Activated T-helper 2 cell treated with anti-CD3 and anti-CD28 coated beads, Interferon-gamma antibody, Interleukin-2, Interleukin-4, amounts not matched to agents 10 μg/mL and 5 μg/mL and 100 μg/mL, durations not matched to agents 14 hours and 24 hours and 36 hours (primary cell): ENCODE measurements at regions of chr6 and their contacts with region 1.

Region 1: GRCh38 chr6:151004415-151005024 is 139.0 kb downstream of the MTHFD1L start:
- DNase-seq: no peak
- H3K4me3 Mint-ChIP-seq: no peak overlapping the region
- H3K27ac Mint-ChIP-seq: peak overlapping the region; percentile 67
- H3K4me1 Mint-ChIP-seq: peaks cover 33% of the 10 kb centered on the region
- H3K27me3 Mint-ChIP-seq: no peaks in the 10 kb centered on the region

Region 2: DNA sequence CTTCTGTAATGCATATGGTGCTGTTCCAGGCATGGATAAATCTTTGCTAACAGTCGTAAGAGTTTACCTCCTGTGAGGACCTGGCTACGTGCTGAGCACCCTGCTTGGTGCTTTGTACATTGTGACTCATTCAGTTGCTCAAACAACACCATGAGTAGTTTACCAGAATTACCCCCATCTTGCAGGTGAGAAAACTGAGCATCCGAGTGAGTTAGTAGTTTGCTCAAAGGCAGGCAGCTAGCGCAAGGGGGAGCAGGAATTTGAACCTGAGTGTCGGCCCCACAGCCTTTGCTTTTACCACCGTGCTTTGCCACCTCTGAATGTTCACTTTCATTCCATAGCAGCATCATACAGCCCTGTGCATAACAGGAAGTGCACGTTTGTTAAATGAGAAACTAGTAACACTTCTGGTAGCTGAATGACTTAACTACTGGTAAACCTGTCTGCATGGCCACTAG is 17.1 kb before region 1 on chr6:
- intact Hi-C with region 1: loop called (anchors 2 kb)
- DNase-seq: peak; percentile 29
- H3K4me3 Mint-ChIP-seq: peak overlapping the region; percentile 49
- H3K27ac Mint-ChIP-seq: peak overlapping the region; percentile 95
- H3K4me1 Mint-ChIP-seq: peaks cover 9% of the 10 kb centered on the region
- H3K27me3 Mint-ChIP-seq: no peaks in the 10 kb centered on the region

Region 3: DNA sequence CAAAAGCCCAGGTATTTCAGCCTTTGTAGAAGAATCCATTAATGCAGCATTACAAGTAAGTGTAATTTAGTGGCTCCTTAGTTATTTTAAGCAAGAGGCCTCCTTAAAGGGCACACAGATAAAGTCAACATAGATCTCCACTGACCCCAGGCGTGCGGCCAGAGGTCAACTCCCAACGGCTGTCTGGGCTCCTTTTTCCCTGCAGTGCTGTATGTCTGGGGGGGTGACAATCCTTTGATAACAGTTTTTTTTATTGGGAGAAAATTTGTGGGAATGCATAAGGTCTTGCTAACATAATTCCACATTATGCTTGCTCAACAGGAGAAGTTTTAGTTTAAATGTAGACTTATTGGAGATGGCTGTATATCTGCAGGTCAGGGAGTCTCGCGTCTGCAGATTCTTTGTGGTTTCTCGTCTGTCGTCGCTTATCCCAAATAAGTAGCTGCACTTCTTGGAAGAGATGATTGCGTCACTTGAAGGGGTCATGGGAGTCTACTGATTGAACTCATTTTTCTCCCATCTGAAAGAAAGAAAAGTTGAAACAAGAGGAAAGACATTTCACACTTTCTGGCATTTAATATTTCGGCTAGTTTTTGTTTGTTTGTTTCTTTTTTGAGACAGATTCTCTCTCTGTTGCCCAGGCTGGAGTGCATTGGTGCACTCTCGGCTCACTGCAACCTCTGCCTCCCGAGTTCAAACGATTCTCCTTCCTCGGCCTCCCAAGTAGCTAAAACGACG is 83.5 kb after region 1 on chr6:
- intact Hi-C with region 1: no loop called
- DNase-seq: no peak
- H3K4me3 Mint-ChIP-seq: no peak overlapping the region
- H3K27ac Mint-ChIP-seq: no peak overlapping the region
- H3K4me1 Mint-ChIP-seq: peaks cover 6% of the 10 kb centered on the region
- H3K27me3 Mint-ChIP-seq: no peaks in the 10 kb centered on the region